ENCODE measurements at regions of chr2 and their contacts with region 1.

Region 1: GRCh38 chr2:165239230-165239629 is at the start of gene SCN2A:
- DNase-seq: no peak
- H3K4me3 Mint-ChIP-seq: no peak within 1 kb of the TSS
- H3K27ac Mint-ChIP-seq: no peak within 1 kb of the TSS
- H3K4me1 Mint-ChIP-seq: no peaks in the 10 kb centered on the region
- H3K27me3 Mint-ChIP-seq: no peaks in the 10 kb centered on the region
- total RNA-seq, gene SCN2A: 0.05 TPM in 1 of 2 replicates, not detected in the other

Region 2: DNA sequence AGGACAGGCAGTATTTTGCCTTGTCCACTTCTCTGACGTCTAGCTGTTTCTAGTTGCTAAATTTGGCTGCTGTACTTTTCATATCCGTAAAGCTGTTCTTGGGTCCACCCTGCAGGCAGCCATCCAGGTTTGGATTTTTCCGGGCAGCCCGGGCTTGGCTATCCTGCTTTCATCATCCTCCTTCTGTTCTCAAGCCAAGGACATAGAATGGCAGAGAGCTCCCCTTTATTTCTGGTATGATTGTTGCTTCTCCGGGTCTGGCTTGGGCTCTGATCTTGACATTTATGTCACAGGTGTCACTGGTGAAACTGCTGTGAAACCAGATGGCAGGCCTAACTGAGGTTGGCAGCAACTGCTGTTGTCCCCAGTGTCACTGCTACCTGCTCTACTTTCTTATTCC is 35.5 kb after region 1 on chr2:
- intact Hi-C with region 1: loop called (anchors 5 kb)
- DNase-seq: no peak
- H3K4me3 Mint-ChIP-seq: no peak overlapping the region
- H3K27ac Mint-ChIP-seq: no peak overlapping the region
- H3K4me1 Mint-ChIP-seq: peaks cover 8% of the 10 kb centered on the region
- H3K27me3 Mint-ChIP-seq: no peaks in the 10 kb centered on the region

Measured in activated T-helper 2 cell treated with anti-CD3 and anti-CD28 coated beads, Interferon-gamma antibody, Interleukin-2, Interleukin-4, amounts not matched to agents 10 μg/mL and 5 μg/mL and 100 μg/mL, durations not matched to agents 14 hours and 24 hours and 36 hours (primary cell).